ENCODE measurements at regions of chr1 and their contacts with region 1.

Region 1: GRCh38 chr1:28926629-28927265 is 12.4 kb downstream of the EPB41 start:
- DNase-seq: peak; percentile 32
- ATAC-seq: peak; percentile 83
- H3K4me3 Mint-ChIP-seq: peak overlapping the region; percentile 57
- H3K27ac Mint-ChIP-seq: peak overlapping the region; percentile 89
- H3K4me1 Mint-ChIP-seq: peaks cover 49% of the 10 kb centered on the region
- H3K27me3 Mint-ChIP-seq: no peaks in the 10 kb centered on the region
- CTCF ChIP-seq: no peak

Region 2: GRCh38 chr1:28902738-28903137 is 24.0 kb before region 1 on chr1:
- CTCF ChIA-PET with region 1: no interaction called
- POLR2A ChIA-PET with region 1: no interaction called
- intact Hi-C with region 1: no loop called
- DNase-seq: no peak
- ATAC-seq: no peak
- H3K4me3 Mint-ChIP-seq: no peak overlapping the region
- H3K27ac Mint-ChIP-seq: no peak overlapping the region
- H3K4me1 Mint-ChIP-seq: peaks cover 12% of the 10 kb centered on the region
- H3K27me3 Mint-ChIP-seq: no peaks in the 10 kb centered on the region
- CTCF ChIP-seq: no peak

Region 3: DNA sequence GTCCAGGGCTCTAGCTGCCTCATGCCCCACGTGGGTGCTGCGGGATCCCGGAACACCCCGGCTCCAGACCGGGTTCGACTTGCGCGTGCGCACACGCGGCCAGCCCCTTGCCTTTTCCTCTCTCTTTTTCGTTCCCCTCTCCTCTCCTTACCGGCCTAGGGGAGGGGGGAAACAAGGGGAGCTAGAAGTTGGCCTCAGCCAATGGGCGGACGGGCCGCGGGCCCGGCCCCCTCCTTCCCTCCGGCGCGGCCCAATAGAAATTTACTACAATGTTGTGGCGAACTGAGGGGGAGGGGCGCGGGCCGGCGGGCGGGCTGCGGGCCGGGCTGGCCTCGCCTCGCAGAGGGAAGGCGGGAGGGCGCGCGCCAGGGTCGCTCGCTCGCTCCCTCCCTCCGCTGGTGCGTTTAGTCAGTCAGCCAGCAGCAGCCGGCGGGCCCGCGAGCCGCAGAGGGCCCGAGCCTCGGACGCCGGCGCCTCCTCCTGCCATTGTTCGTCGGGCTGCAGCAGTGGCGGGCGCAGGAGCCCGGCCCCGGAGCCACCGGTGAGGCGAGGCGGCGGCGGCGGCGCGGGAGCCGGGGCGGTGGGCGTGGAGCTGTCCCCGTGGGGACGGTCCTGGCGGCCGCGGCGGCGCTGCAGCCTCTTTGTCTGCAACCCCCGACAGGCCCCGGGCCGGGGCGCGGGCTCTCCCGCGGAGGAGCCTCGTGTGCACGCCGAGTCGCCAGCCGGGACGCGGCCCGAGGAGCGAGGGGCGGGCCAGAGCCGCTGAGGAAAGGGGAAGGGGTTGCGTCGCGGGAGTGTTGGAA is 12.3 kb before region 1 on chr1 and contains the start of gene EPB41:
- CTCF ChIA-PET with region 1: interaction called, 11 read pairs
- POLR2A ChIA-PET with region 1: interaction called, 11 read pairs
- intact Hi-C with region 1: no loop called
- DNase-seq: peak; percentile 93
- ATAC-seq: peak; percentile 90
- H3K4me3 Mint-ChIP-seq: peak within 1 kb of the TSS; percentile 92
- H3K27ac Mint-ChIP-seq: peak within 1 kb of the TSS; percentile 95
- H3K4me1 Mint-ChIP-seq: peaks cover 48% of the 10 kb centered on the region
- H3K27me3 Mint-ChIP-seq: no peaks in the 10 kb centered on the region
- CTCF ChIP-seq: no peak
- total RNA-seq, gene EPB41: 74.9 to 80.3 TPM

Region 4: GRCh38 chr1:28956038-28956464 is 29.3 kb after region 1 on chr1:
- CTCF ChIA-PET with region 1: no interaction called
- POLR2A ChIA-PET with region 1: interaction called, 3 read pairs
- intact Hi-C with region 1: loop called (anchors 5 kb)
- DNase-seq: no peak
- ATAC-seq: peak; percentile 67
- H3K4me3 Mint-ChIP-seq: no peak overlapping the region
- H3K27ac Mint-ChIP-seq: no peak overlapping the region
- H3K4me1 Mint-ChIP-seq: peaks cover 45% of the 10 kb centered on the region
- H3K27me3 Mint-ChIP-seq: no peaks in the 10 kb centered on the region
- CTCF ChIP-seq: no peak

Measured in activated CD8-positive, alpha-beta T cell treated with anti-CD3 and anti-CD28 coated beads for 36 hours (primary cell).